ENCODE measurements at regions of chr18 and their contacts with region 1.

Region 1: DNA sequence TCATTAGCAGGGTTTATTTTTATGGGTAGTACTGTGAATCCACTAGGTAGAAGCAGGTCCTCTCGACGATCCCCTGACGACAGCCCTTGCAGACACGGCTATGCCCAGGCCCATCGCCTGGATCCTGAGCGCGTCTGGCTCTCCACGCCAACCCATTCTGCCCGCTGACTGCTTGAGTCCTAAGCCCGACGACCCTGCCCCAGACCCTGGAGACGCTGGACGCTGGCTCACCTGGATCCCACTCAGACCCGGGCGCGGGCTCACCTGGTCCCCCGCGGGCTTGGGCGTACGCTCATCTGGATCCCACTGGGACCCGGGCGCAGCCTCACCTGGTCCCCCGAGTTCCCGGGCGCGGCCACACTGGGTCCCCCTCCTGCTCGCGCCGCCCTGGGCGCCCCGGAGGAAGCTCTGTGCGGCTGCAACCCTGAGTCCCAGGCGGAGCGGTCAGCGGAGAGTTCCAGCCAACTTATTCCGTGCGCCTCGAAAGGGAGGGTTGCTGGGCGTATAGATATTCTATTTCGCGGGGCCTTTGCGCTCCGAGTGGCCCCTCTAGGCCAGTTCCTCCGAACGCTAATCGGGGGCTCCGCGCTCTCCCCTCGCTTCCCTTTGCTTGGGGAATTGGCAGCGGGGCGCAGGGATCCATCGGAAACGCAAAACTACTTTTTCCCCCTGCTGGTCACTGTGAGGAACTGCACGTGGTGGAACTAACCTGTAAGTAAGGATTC is 22.4 kb upstream of the RMP24 start:
- DNase-seq: peak; percentile 41
- ATAC-seq: peak; percentile 37; the same call in 1 of the 2 replicates
- H3K4me3 ChIP-seq: peak overlapping the region; percentile 48; the same call in 1 of the 2 replicates
- H3K27ac ChIP-seq: no peak overlapping the region
- H3K4me1 ChIP-seq: no peaks in the 10 kb centered on the region
- H3K27me3 ChIP-seq: no peaks in the 10 kb centered on the region
- CTCF ChIP-seq: peak; percentile 63

Region 2: GRCh38 chr18:35747894-35748472 is 202.1 kb before region 1 on chr18:
- CTCF ChIA-PET with region 1: no interaction called
- POLR2A ChIA-PET with region 1: no interaction called
- intact Hi-C with region 1: no loop called
- DNase-seq: no peak
- ATAC-seq: no peak
- H3K4me3 ChIP-seq: no peak overlapping the region
- H3K27ac ChIP-seq: no peak overlapping the region
- H3K4me1 ChIP-seq: no peaks in the 10 kb centered on the region
- H3K27me3 ChIP-seq: no peaks in the 10 kb centered on the region
- CTCF ChIP-seq: no peak

Region 3: GRCh38 chr18:35917044-35917443 is 33.0 kb before region 1 on chr18:
- CTCF ChIA-PET with region 1: no interaction called
- POLR2A ChIA-PET with region 1: no interaction called
- intact Hi-C with region 1: loop called (anchors 1 kb)
- DNase-seq: peak; percentile 2
- ATAC-seq: no peak
- H3K4me3 ChIP-seq: no peak overlapping the region
- H3K27ac ChIP-seq: no peak overlapping the region
- H3K4me1 ChIP-seq: no peaks in the 10 kb centered on the region
- H3K27me3 ChIP-seq: 0 out of 2 replicates have a peak, but pooled peaks cover 3% of the 10 kb centered on the region
- CTCF ChIP-seq: peak; percentile 40

Region 4: GRCh38 chr18:36186911-36187834 is 237.1 kb after region 1 on chr18 and contains the start of gene MOCOS:
- CTCF ChIA-PET with region 1: no interaction called
- POLR2A ChIA-PET with region 1: no interaction called
- intact Hi-C with region 1: no loop called
- DNase-seq: peak; percentile 55
- ATAC-seq: peak; percentile 91
- H3K4me3 ChIP-seq: peak within 1 kb of the TSS; percentile 84
- H3K27ac ChIP-seq: peak within 1 kb of the TSS; percentile 46
- H3K4me1 ChIP-seq: peaks cover 11% of the 10 kb centered on the region
- H3K27me3 ChIP-seq: no peaks in the 10 kb centered on the region
- CTCF ChIP-seq: no peak
- total RNA-seq, gene MOCOS: 5.1 TPM in 2 replicates

Measured in PC-3 (cell line).